ENCODE measurements at regions of chr16 and their contacts with region 1.

Region 1: DNA sequence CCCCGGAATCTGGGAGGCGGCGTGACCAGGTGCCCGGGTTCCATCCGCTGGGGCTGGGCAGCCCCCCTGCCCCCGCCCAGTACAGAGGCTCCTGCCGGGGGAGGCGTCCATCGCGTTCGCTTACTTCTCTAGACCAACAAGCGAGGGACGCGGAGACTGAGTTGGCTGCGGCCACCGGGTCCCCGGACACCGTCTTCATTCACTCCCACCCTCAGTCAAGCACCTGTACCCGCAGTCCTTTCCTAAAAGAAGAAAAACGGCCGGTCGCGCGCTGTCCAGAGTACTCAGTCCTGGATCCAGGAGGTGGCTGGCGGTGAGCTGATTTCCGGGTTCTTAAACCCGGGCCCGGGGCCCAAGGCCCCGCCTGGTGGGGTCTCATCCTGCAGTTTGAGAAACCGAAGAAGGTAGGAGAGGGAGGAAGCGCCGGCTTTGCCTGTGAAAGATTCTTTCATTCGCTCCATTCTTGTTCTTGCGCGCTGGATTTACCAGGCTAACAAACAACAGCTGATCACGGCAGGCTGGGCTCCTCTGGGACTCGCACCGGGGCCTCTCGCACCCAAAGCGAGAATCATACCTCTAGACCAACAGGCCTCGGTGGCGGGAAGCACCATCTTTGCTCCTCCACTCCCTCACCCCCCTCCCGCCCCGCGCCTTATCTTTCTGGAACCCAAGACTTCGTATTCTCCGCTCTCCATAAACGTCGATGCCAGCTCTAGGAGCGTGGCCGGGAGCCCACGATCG is 17.4 kb upstream of the OR1F1 start:
- DNase-seq: no peak
- H3K4me3 ChIP-seq: peak overlapping the region in 1 of 2 donors; percentile 1
- H3K27ac ChIP-seq: no peak overlapping the region
- H3K4me1 ChIP-seq: peaks cover 0 to 31% (median 18%) of the 10 kb centered on the region in 4 donors
- H3K27me3 ChIP-seq: peaks cover 13 to 78% of the 10 kb centered on the region in 2 donors
- CTCF ChIP-seq: no peak

Region 2: GRCh38 chr16:3123986-3124886 is 46.4 kb before region 1 on chr16:
- intact Hi-C with region 1: no loop called
- DNase-seq: peak; percentile 97 to 98
- H3K4me3 ChIP-seq: peak overlapping the region; percentile 77 to 87
- H3K27ac ChIP-seq: peak overlapping the region; percentile 73 to 83
- H3K4me1 ChIP-seq: peaks cover 0 to 25% (median 21%) of the 10 kb centered on the region in 4 donors
- H3K27me3 ChIP-seq: no peaks in the 10 kb centered on the region
- CTCF ChIP-seq: no peak

Region 3: DNA sequence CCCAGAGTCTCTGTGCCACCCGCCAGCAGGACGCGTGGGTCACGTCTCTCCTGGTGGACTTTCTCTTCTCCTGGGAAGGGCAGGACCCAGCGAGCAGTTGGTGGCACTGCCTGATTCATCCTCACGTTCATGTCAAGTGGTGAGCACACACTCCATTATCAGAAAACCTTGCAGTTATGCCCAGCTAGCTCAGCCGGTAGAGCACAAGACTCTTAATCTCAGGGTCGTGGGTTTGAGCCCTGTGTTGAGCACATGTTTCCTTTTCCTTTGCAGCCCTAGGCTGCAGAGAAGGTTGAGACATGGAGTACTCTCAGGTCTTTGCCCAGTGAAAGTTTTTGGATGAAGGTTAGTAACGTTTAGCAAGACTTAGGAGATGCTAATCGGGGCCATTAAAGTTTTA is 25.4 kb after region 1 on chr16:
- intact Hi-C with region 1: loop called (anchors 1 kb)
- DNase-seq: no peak
- H3K4me3 ChIP-seq: no peak overlapping the region
- H3K27ac ChIP-seq: no peak overlapping the region
- H3K4me1 ChIP-seq: no peaks in the 10 kb centered on the region
- H3K27me3 ChIP-seq: peaks cover 8 to 72% of the 10 kb centered on the region in 2 donors
- CTCF ChIP-seq: no peak

Region 4: GRCh38 chr16:4271176-4272066 is 1100.8 kb after region 1 on chr16:
- intact Hi-C with region 1: no loop called
- DNase-seq: peak; percentile 91 to 95
- H3K4me3 ChIP-seq: peak overlapping the region; percentile 96 to 98
- H3K27ac ChIP-seq: peak overlapping the region; percentile 89 to 93
- H3K4me1 ChIP-seq: peaks cover 0 to 17% (median 14%) of the 10 kb centered on the region in 4 donors
- H3K27me3 ChIP-seq: no peaks in the 10 kb centered on the region
- CTCF ChIP-seq: peak in 1 of 2 experiments; percentile 8

Measured in tibial artery (tissue), 4 donors.